Natural killer cell (primary cell): ENCODE measurements at regions of chr20 and their contacts with region 1.

Region 1: DNA sequence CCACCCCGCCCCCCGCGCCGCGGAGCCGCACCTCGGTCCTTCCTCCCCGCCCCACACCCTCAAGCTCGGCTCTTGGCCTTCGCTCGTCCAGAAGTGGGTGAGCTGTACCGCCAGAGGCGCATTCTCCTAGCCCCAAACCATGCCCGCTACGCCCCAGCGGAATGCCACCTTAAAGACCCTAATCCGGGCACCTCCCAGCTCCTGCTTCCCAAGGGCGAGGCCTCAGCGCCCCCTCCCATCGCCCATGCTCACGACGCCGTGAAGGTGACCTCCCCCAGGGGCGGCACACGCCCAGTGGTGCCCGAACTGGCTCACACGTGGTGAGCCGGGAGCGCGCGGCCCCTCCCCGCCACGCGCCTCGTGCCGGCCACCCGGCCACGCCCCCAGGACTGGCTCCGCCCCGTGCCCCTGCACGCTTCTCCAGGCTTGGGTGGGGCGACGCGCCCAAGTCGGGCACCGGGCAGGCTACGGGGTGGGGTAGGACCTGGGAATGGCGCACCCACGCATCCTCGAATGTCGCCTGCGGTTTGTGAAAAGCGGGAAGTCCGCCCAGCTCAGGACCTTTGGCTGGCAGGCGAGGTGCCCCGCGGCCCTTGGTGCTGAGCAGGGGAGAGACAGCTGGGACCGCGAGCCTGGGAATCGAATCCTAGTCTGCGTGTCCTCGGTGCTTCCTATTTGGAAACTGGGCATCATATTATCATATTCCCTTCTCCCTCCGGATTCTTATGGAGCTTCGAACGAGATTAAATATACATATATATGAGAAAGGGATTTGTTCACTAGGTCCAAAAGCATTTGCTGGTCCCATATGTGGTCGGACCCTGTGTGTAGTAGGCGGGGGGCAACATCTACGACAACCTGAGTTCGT is 941 bp upstream of the SOX12 start:
- DNase-seq: peak; percentile 88 to 92
- ATAC-seq: peak; percentile 72 to 88 (median 74)
- H3K4me3 ChIP-seq: peak overlapping the region; percentile 59
- H3K4me3 Mint-ChIP-seq: peak overlapping the region; percentile 91
- H3K27ac ChIP-seq: peak overlapping the region; percentile 60
- H3K27ac Mint-ChIP-seq: peak overlapping the region; percentile 70 to 74
- H3K4me1 ChIP-seq: peaks cover 32% of the 10 kb centered on the region
- H3K4me1 Mint-ChIP-seq: peaks cover 0 to 11% of the 10 kb centered on the region in 2 donors
- H3K27me3 ChIP-seq: no peaks in the 10 kb centered on the region
- H3K27me3 Mint-ChIP-seq: no peaks in the 10 kb centered on the region
- CTCF ChIP-seq: peak; percentile 20

Region 2: DNA sequence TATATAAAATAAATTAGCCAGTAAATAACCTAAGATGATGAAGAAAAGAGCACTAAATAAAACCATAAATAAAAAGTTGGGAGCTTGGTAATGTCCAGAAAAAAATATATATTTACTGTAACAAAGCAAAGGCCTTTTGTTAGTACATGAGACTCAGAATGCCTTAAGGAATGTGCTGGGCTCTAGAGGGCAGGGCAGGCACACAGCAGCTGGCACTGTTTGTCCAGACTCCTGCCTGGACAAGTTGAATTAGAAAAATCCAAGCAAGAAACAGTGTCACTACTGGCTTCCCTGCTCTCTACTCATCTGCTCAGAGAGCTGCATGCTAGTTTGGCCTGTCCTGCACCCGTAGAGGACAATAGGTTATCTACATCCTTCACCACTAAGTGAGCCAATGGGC is 88.5 kb before region 1 on chr20:
- intact Hi-C with region 1: no loop called
- DNase-seq: no peak
- ATAC-seq: no peak
- H3K4me3 ChIP-seq: no peak overlapping the region
- H3K4me3 Mint-ChIP-seq: no peak overlapping the region
- H3K27ac ChIP-seq: no peak overlapping the region
- H3K27ac Mint-ChIP-seq: no peak overlapping the region
- H3K4me1 ChIP-seq: peaks cover 3% of the 10 kb centered on the region
- H3K4me1 Mint-ChIP-seq: peaks cover 6% of the 10 kb centered on the region in 2 donors
- H3K27me3 ChIP-seq: no peaks in the 10 kb centered on the region
- H3K27me3 Mint-ChIP-seq: peaks cover 0 to 6% of the 10 kb centered on the region in 2 donors
- CTCF ChIP-seq: no peak

Region 3: DNA sequence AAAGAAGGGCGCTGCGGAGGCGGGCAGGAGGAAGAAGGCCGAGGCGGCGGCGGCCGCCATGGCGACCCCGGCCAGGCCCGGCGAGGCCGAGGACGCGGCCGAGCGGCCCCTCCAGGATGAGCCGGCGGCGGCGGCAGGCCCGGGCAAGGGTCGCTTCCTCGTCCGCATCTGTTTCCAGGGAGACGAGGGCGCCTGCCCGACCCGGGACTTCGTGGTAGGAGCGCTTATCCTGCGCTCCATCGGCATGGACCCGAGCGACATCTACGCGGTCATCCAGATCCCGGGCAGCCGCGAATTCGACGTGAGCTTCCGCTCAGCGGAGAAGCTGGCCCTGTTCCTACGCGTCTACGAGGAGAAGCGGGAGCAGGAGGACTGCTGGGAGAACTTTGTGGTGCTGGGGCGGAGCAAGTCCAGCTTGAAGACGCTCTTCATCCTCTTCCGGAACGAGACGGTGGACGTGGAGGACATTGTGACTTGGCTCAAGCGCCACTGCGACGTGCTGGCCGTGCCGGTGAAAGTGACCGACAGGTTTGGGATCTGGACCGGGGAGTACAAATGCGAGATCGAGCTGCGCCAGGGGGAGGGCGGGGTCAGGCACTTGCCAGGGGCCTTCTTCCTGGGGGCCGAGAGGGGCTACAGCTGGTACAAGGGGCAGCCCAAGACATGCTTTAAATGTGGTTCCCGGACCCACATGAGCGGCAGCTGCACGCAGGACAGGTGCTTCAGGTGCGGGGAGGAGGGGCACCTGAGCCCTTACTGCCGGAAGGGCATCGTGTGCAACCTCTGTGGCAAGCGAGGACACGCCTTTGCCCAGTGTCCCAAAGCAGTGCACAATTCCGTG is 26.3 kb before region 1 on chr20:
- intact Hi-C with region 1: loop called (anchors 1 kb)
- DNase-seq: peak; percentile 33 to 65
- ATAC-seq: peak; percentile 17 to 25 (median 19)
- H3K4me3 ChIP-seq: peak overlapping the region; percentile 73
- H3K4me3 Mint-ChIP-seq: peak overlapping the region; percentile 98
- H3K27ac ChIP-seq: peak overlapping the region; percentile 85
- H3K27ac Mint-ChIP-seq: peak overlapping the region; percentile 96 to 100
- H3K4me1 ChIP-seq: peaks cover 27% of the 10 kb centered on the region
- H3K4me1 Mint-ChIP-seq: peaks cover 39 to 54% of the 10 kb centered on the region in 2 donors
- H3K27me3 ChIP-seq: no peaks in the 10 kb centered on the region
- H3K27me3 Mint-ChIP-seq: no peaks in the 10 kb centered on the region
- CTCF ChIP-seq: no peak

Region 4: DNA sequence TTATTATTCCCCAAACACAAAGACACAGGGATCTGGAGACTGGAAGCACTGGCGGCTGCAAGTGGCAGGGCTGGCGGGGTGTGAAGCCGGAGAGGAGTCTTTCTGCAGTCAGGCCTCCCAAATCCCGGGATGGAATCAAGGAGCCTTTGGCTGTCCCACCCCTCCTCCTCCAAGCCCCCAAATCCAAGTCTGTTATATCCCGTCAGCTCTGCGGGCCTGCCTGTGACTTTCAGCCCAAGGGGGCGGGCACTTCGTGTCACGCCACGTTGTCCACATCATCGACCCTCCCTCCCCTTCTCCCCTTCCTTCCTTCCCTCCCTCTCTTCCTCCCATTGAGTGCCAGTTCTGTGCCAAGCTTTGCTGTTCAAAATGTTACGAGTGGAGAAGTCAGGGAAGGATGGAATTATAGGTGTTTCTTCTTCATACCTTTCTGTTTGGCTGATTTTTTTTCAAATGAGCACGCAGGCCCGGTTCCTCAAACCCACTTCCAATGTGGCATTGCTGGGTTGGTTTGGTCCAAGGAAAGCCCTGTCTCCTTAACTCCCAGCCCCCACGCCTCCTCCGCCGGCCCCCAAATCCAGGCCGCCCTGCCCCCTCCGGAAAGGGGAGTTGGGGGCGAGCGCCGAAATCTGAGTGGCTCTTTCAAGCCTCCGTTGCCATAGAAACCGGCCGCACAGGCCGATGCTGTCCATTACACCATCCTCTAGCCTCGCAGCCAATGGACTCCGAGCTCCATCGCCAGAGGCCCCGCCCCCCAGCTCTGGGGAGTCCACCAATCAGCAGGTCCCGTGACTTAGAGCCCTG is 14.4 kb before region 1 on chr20:
- intact Hi-C with region 1: loop called (anchors 2 kb)
- DNase-seq: peak; percentile 75 to 84
- ATAC-seq: peak; percentile 97 to 100 (median 100)
- H3K4me3 ChIP-seq: peak overlapping the region; percentile 17
- H3K4me3 Mint-ChIP-seq: peak overlapping the region; percentile 87
- H3K27ac ChIP-seq: no peak overlapping the region
- H3K27ac Mint-ChIP-seq: peak overlapping the region; percentile 16 to 90
- H3K4me1 ChIP-seq: peaks cover 10% of the 10 kb centered on the region
- H3K4me1 Mint-ChIP-seq: peaks cover 16 to 20% of the 10 kb centered on the region in 2 donors
- H3K27me3 ChIP-seq: no peaks in the 10 kb centered on the region
- H3K27me3 Mint-ChIP-seq: peaks cover 0 to 2% of the 10 kb centered on the region in 2 donors
- CTCF ChIP-seq: no peak